ENCODE measurements at regions of chr2 and their contacts with region 1.

Region 1: GRCh38 chr2:28649481-28650214 is 102.0 kb upstream of the PPP1CB start:
- DNase-seq: peak in 1 of 2 donors; percentile 59
- ATAC-seq: no peak
- H3K4me3 ChIP-seq: no peak overlapping the region
- H3K27ac ChIP-seq: peak overlapping the region; percentile 77 to 80
- H3K4me1 ChIP-seq: peaks cover 0 to 9% of the 10 kb centered on the region in 2 donors
- H3K27me3 ChIP-seq: no peaks in the 10 kb centered on the region

Region 2: DNA sequence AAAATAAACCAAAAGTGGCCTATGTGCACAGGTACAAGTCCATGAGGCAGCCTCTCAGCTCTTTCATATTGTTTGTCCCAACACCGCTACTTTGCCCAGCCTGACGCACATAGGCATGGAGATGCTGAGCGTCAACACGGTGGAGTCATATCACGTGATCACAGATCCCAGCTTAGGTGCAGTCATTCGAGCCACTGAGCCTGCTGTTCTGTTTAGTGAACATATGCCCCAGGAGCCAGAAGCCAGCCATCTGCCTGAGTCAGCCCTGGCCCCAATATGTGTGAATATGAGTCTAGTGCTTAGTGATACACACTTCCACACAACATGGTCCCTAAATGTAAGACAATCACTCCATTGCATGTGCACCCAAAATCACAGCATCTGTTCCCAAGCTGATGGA is 1709.2 kb after region 1 on chr2:
- intact Hi-C with region 1: loop called in 1 of 2 experiments (anchors 5 kb)
- DNase-seq: no peak
- ATAC-seq: no peak
- H3K4me3 ChIP-seq: no peak overlapping the region
- H3K27ac ChIP-seq: peak overlapping the region in 1 of 2 donors; percentile 87
- H3K4me1 ChIP-seq: peaks cover 5 to 7% of the 10 kb centered on the region in 2 donors
- H3K27me3 ChIP-seq: no peaks in the 10 kb centered on the region

Measured in aorta (tissue), 5 donors.